CD4-positive, alpha-beta T cell (primary cell): ENCODE measurements at regions of chr1 and their contacts with region 1.

Region 1: DNA sequence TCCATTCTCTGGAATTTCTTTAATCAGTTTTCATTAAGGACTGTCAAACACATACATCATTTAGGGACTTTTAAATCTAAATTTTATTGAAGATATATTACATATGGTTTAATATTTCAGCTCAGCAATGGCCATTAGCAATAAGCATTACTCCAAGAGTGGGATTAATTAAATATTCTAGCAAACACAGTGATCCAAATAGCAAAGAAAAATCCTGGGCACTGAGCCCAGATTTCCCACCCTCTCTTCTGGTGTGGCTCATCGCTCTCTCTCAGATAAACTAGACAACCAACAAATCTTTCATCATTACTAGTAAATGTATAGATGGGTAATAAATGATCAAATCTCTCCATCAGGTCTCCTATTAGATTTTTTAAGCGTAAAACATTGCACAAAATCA is 53.5 kb upstream of the FOXD3 start:
- DNase-seq: no peak
- ATAC-seq: no peak
- H3K4me3 ChIP-seq: no peak overlapping the region
- H3K4me3 Mint-ChIP-seq: no peak overlapping the region
- H3K27ac ChIP-seq: no peak overlapping the region
- H3K27ac Mint-ChIP-seq: no peak overlapping the region
- H3K4me1 ChIP-seq: no peaks in the 10 kb centered on the region
- H3K4me1 Mint-ChIP-seq: no peaks in the 10 kb centered on the region
- H3K27me3 ChIP-seq: peaks cover 0 to 13% of the 10 kb centered on the region in 2 experiments
- H3K27me3 Mint-ChIP-seq: peaks cover 51% of the 10 kb centered on the region
- CTCF ChIP-seq: no peak

Region 2: DNA sequence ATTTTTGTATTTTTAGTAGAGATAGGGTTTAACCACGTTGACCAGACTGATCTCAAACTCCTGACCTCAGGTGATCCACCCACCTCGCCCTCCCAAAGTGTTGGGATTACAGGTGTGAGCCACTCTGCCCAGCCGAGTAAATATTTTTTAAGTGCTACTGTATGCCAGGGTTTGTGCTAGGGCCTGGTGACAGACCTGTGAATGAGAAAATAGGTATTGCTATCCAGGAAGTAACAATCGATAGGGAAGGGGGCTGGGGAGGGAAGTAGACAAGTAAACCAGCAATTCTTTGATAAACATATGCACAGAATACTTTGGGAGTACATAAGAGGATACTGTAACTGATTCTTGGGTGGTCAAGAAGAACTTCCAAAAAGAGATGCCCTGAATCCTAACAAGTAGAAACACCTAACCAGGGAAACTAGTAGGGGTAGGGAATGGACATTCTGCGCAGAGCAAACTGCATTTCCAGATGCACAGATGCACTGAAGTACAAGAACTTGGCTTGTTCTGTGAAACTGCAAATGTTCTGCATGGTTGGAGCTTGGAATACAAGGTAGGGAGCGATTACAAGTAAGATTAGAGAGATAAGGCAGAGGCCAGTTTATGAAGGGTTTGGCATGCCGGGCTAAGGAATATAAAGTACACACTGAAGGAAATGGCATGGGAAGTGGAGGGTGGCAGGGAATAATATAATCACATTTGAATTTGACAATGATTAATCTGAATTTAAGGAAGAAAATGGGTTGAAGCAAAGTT is 561.7 kb before region 1 on chr1:
- CTCF ChIA-PET with region 1: no interaction called
- POLR2A ChIA-PET with region 1: no interaction called
- intact Hi-C with region 1: no loop called
- DNase-seq: no peak
- ATAC-seq: no peak
- H3K4me3 ChIP-seq: no peak overlapping the region
- H3K4me3 Mint-ChIP-seq: no peak overlapping the region
- H3K27ac ChIP-seq: no peak overlapping the region
- H3K27ac Mint-ChIP-seq: no peak overlapping the region
- H3K4me1 ChIP-seq: no peaks in the 10 kb centered on the region
- H3K4me1 Mint-ChIP-seq: no peaks in the 10 kb centered on the region
- H3K27me3 ChIP-seq: no peaks in the 10 kb centered on the region
- H3K27me3 Mint-ChIP-seq: no peaks in the 10 kb centered on the region
- CTCF ChIP-seq: no peak

Region 3: GRCh38 chr1:63343922-63344321 is 75.0 kb after region 1 on chr1:
- CTCF ChIA-PET with region 1: no interaction called
- POLR2A ChIA-PET with region 1: no interaction called
- intact Hi-C with region 1: loop called in 1 of 2 experiments (anchors 2 kb)
- DNase-seq: no peak
- ATAC-seq: no peak
- H3K4me3 ChIP-seq: no peak overlapping the region
- H3K4me3 Mint-ChIP-seq: no peak overlapping the region
- H3K27ac ChIP-seq: no peak overlapping the region
- H3K27ac Mint-ChIP-seq: no peak overlapping the region
- H3K4me1 ChIP-seq: no peaks in the 10 kb centered on the region
- H3K4me1 Mint-ChIP-seq: no peaks in the 10 kb centered on the region
- H3K27me3 ChIP-seq: peaks cover 14 to 15% of the 10 kb centered on the region in 2 experiments
- H3K27me3 Mint-ChIP-seq: peaks cover 44% of the 10 kb centered on the region
- CTCF ChIP-seq: no peak

Region 4: DNA sequence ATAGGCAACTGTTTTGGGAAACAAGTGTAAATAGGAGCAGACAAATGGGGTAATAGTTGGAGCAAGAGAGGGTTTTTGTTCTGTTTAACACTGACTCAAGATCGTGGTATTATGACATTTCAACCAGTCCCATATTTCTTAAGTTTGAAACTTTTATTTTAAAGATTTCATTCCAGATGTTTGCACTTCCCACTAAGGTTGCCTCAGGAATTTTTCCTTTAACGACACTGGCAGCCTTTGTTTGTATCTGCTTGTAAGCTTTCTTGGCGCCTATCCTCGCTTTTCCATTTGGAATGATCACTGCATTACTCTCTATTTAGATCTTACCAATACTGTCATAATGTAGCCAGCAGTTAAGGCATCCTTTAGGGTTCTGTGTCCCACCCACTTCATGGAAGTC is 166.3 kb after region 1 on chr1:
- CTCF ChIA-PET with region 1: no interaction called
- POLR2A ChIA-PET with region 1: no interaction called
- intact Hi-C with region 1: no loop called
- DNase-seq: no peak
- ATAC-seq: no peak
- H3K4me3 ChIP-seq: no peak overlapping the region
- H3K4me3 Mint-ChIP-seq: no peak overlapping the region
- H3K27ac ChIP-seq: no peak overlapping the region
- H3K27ac Mint-ChIP-seq: no peak overlapping the region
- H3K4me1 ChIP-seq: no peaks in the 10 kb centered on the region
- H3K4me1 Mint-ChIP-seq: no peaks in the 10 kb centered on the region
- H3K27me3 ChIP-seq: no peaks in the 10 kb centered on the region
- H3K27me3 Mint-ChIP-seq: no peaks in the 10 kb centered on the region
- CTCF ChIP-seq: no peak